ENCODE measurements at regions of chr18 and their contacts with region 1.

Region 1: DNA sequence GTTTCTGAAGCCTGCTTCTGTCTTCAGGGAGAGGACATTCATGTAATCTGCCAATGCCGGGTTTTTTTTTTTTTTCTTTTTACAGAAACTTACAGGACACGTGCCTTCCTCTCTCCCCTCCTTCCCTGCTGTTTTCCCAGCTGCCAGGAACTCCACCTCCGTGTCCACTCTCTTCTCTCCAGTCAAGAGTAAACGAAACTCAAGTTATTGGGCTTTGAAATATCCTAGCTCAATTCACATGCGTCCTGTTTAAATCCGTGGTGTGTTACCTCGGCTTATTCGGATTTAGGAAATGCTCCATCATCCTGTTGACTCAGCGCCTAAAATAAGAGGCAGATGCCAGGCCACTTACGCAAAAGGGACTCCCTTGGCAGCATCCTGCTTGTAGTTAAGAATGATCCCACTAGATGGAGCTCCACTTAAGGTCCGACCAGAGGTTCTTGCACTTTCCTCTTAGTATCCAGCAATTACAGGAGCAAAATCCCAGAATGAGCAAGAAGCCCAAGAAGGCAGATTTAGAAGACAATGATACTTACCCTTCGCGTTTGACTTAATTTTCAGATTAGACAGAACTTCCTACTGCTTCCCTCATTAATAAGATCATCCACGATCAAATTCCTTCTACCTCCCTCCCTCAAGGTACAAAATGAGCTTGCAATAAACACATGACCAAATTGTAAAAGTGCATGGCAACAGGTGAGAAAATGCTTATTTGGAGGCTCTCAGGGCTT is 97.2 kb upstream of the ZCCHC2 start:
- DNase-seq: peak in 30 of 35 experiments; percentile 5 to 80 (median 32)
- ATAC-seq: peak; percentile 26 to 64 (median 44)
- H3K4me3 ChIP-seq: no peak overlapping the region
- H3K4me3 Mint-ChIP-seq: no peak overlapping the region
- H3K27ac ChIP-seq: no peak overlapping the region
- H3K27ac Mint-ChIP-seq: peak overlapping the region in 1 of 2 donors; percentile 10
- H3K4me1 ChIP-seq: peaks cover 0 to 8% of the 10 kb centered on the region in 2 experiments
- H3K4me1 Mint-ChIP-seq: peaks cover 20 to 22% (median 21%) of the 10 kb centered on the region in 3 donors
- H3K27me3 ChIP-seq: peaks cover 0 to 2% of the 10 kb centered on the region in 2 experiments
- H3K27me3 Mint-ChIP-seq: peaks cover 0 to 4% of the 10 kb centered on the region in 2 donors

Region 2: DNA sequence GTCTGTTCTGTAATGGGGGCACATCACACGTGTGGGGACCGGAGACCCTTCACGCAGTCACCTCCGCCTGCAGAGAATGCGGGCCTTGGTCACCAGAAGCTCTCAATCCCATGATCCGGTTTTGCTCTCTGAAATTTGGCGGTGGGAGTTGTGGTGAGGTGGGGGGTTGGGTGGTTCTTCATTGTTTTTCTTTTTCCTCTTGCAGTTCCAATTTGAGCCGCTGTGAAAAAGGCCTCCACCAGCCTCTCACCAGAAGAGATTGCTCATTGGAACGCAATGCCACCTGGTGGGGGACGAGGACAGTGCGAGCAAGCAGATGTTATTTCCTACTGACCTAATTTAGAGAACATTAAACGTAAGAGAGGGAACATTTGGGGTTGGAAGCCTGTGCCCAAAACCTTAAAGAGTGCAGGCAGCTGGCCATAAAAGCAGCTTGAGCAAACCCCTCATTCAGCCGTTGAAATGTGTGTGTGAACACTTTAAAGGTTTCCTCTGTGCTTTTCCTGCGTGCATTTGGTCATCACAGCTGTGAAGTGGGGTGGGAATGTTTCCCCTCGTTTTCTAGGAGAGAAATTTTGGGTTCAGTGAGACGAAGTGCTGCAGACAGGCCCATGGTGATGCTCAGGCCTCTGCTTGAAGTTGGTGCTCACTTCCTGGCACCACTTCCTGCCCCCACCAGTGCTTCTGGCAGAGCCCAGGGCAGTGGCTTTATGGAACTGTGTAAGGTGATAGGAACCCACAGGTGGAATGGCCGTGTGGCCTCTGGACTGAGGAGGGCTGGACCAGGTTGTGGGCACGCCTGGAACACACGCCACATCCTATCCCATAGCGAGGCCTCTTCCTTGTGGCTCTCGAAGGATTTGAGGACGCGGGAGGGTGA is 158.9 kb after region 1 on chr18:
- CTCF ChIA-PET with region 1: interaction called, 9 to 15 read pairs
- POLR2A ChIA-PET with region 1: no interaction called
- DNase-seq: peak; percentile 63 to 91 (median 82)
- ATAC-seq: peak; percentile 89 to 95 (median 92)
- H3K4me3 ChIP-seq: no peak overlapping the region
- H3K4me3 Mint-ChIP-seq: peak overlapping the region in 1 of 3 donors; percentile 58
- H3K27ac ChIP-seq: no peak overlapping the region
- H3K27ac Mint-ChIP-seq: peak overlapping the region; percentile 69 to 70
- H3K4me1 ChIP-seq: peaks cover 9 to 27% of the 10 kb centered on the region in 2 experiments
- H3K4me1 Mint-ChIP-seq: peaks cover 23 to 38% (median 38%) of the 10 kb centered on the region in 3 donors
- H3K27me3 ChIP-seq: no peaks in the 10 kb centered on the region
- H3K27me3 Mint-ChIP-seq: no peaks in the 10 kb centered on the region

Measured in T-cell (primary cell).